ENCODE measurements at regions of chr12 and their contacts with region 1.

Region 1: GRCh38 chr12:98939350-98939749 is 294.3 kb downstream of the APAF1 start:
- H3K4me3 ChIP-seq: no peak overlapping the region
- H3K27ac ChIP-seq: no peak overlapping the region
- H3K4me1 ChIP-seq: no peaks in the 10 kb centered on the region
- CTCF ChIP-seq: no peak

Region 2: GRCh38 chr12:98724384-98725155 is 214.8 kb before region 1 on chr12:
- CTCF ChIA-PET with region 1: interaction called, 12 read pairs
- POLR2A ChIA-PET with region 1: no interaction called
- H3K4me3 ChIP-seq: no peak overlapping the region
- H3K27ac ChIP-seq: no peak overlapping the region
- H3K4me1 ChIP-seq: no peaks in the 10 kb centered on the region
- CTCF ChIP-seq: no peak